H1 (cell line): ENCODE measurements at regions of chr11 and their contacts with region 1.

Region 1: GRCh38 chr11:46295312-46296058 is 18.0 kb downstream of the CREB3L1 start:
- DNase-seq: peak; percentile 64 to 92
- H3K4me3 ChIP-seq: peak overlapping the region; percentile 42 to 67 (median 54)
- H3K27ac ChIP-seq: peak overlapping the region; percentile 79
- H3K4me1 ChIP-seq: peaks cover 22 to 49% (median 35%) of the 10 kb centered on the region in 4 experiments
- H3K27me3 ChIP-seq: no peaks in the 10 kb centered on the region
- CTCF ChIP-seq: no peak
- EP300 ChIP-seq: no peak
- POLR2A ChIP-seq: peak; percentile 71 to 89
- RAD21 ChIP-seq: no peak; a peak in 1 of 4 replicates

Region 2: GRCh38 chr11:46200537-46201281 is 94.8 kb before region 1 on chr11:
- CTCF ChIA-PET with region 1: no interaction called
- POLR2A ChIA-PET with region 1: no interaction called
- DNase-seq: peak in 1 of 2 experiments; percentile 42
- H3K4me3 ChIP-seq: no peak overlapping the region
- H3K27ac ChIP-seq: no peak overlapping the region
- H3K4me1 ChIP-seq: peaks cover 0 to 6% (median 3%) of the 10 kb centered on the region in 4 experiments; a peak in 4 of 7 replicates
- H3K27me3 ChIP-seq: no peaks in the 10 kb centered on the region
- CTCF ChIP-seq: no peak
- EP300 ChIP-seq: no peak
- POLR2A ChIP-seq: no peak
- RAD21 ChIP-seq: no peak

Region 3: DNA sequence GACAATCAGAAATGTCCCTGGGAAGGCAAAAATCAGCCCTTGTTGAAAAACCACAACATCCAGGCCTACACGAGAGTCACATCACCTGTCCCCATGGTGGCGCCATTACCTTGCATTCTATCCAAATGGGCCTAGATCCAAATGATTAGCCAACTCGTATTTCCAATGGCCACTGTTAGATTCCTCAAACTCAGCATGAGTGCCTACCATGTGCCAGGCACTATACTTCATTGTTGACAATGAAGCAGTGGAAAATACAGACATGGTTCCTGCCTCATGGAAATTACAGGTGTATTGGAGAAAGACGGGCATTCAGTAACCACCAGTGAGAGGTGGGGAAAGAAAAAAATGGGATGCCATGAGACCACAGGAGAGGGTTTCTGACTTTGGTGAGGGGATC is 47.8 kb before region 1 on chr11:
- CTCF ChIA-PET with region 1: interaction called, 858 read pairs
- POLR2A ChIA-PET with region 1: interaction called, 127 read pairs
- DNase-seq: peak in 1 of 2 experiments; percentile 72
- H3K4me3 ChIP-seq: no peak overlapping the region
- H3K27ac ChIP-seq: no peak overlapping the region
- H3K4me1 ChIP-seq: peaks cover 1 to 8% (median 3%) of the 10 kb centered on the region in 4 experiments; a peak in 6 of 7 replicates
- H3K27me3 ChIP-seq: no peaks in the 10 kb centered on the region
- CTCF ChIP-seq: peak; percentile 77 to 92 (median 88)
- EP300 ChIP-seq: no peak
- POLR2A ChIP-seq: no peak
- RAD21 ChIP-seq: peak; percentile 97 to 98

Region 4: GRCh38 chr11:46278387-46279125 is 16.9 kb before region 1 on chr11:
- CTCF ChIA-PET with region 1: interaction called, 105 read pairs
- POLR2A ChIA-PET with region 1: interaction called, 51 read pairs
- DNase-seq: peak in 1 of 2 experiments; percentile 92
- H3K4me3 ChIP-seq: peak overlapping the region; percentile 54 to 81 (median 64)
- H3K27ac ChIP-seq: no peak overlapping the region
- H3K4me1 ChIP-seq: peaks cover 18 to 35% (median 24%) of the 10 kb centered on the region in 4 experiments; a peak in 6 of 7 replicates
- H3K27me3 ChIP-seq: no peaks in the 10 kb centered on the region
- CTCF ChIP-seq: peak; percentile 68 to 86 (median 72)
- EP300 ChIP-seq: no peak
- POLR2A ChIP-seq: no peak
- RAD21 ChIP-seq: peak; percentile 43 to 69

Region 5: GRCh38 chr11:46315033-46315738 is 19.7 kb after region 1 on chr11:
- CTCF ChIA-PET with region 1: interaction called, 253 read pairs
- POLR2A ChIA-PET with region 1: interaction called, 55 read pairs
- DNase-seq: peak; percentile 77 to 95
- H3K4me3 ChIP-seq: no peak overlapping the region
- H3K27ac ChIP-seq: no peak overlapping the region
- H3K4me1 ChIP-seq: no peaks in the 10 kb centered on the region
- H3K27me3 ChIP-seq: no peaks in the 10 kb centered on the region
- CTCF ChIP-seq: peak; percentile 84 to 93 (median 84)
- EP300 ChIP-seq: no peak
- POLR2A ChIP-seq: no peak
- RAD21 ChIP-seq: peak; percentile 79 to 83

Region 6: DNA sequence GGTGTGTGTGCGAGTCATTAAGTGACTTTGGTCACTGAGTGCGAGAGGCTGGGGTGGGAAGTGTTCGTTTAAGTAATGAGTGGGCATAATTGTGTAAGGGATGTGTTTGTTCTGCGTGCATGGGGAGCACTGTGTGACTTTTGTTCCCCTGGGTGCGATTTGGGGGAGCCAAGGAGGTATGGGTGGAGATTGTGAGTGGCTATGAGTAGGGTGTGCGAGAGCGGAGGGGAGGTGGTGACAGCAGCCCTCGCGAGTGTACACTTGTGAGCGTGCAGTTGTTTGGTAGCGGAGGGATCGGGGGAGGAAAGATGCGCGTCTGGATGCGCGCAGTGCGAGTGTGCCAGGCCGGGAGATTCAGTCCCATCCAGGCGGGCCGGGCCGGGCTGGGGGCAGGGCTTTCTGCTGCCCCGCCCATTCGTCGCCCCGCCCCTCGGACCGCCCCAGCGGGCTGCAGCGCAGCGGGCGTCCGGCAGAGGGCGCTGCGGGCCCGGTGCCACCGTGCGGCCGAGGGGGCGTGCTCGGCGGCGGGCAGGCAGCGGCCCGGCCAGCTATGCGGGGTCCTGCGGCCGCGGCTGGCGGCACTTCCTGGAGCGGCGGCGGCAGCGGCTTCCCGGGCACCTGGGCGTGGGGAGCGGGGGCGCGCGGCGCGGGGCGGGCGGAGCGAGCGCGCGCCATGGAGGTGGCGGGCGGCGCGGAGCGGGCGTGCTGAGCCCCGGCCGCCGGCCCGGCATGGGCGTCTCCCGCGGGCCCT is 51.6 kb after region 1 on chr11 and contains the start of gene DGKZ:
- CTCF ChIA-PET with region 1: interaction called, 29 read pairs
- POLR2A ChIA-PET with region 1: interaction called, 9 read pairs
- DNase-seq: peak in 1 of 2 experiments; percentile 98
- H3K4me3 ChIP-seq: peak within 1 kb of the TSS; percentile 71 to 83 (median 77)
- H3K27ac ChIP-seq: no peak within 1 kb of the TSS
- H3K4me1 ChIP-seq: peaks cover 26 to 47% (median 33%) of the 10 kb centered on the region in 4 experiments
- H3K27me3 ChIP-seq: peaks cover 0 to 7% (median 3%) of the 10 kb centered on the region in 4 experiments; a peak in 1 of 7 replicates
- CTCF ChIP-seq: peak; percentile 90 to 96 (median 94)
- EP300 ChIP-seq: no peak
- POLR2A ChIP-seq: peak in 1 of 2 experiments; percentile 43; a peak in 1 of 3 replicates
- RAD21 ChIP-seq: peak; percentile 31 to 66; a peak in 3 of 4 replicates
- total RNA-seq, gene DGKZ: 84.4 and 88.5 TPM in 2 replicates

Region 7: DNA sequence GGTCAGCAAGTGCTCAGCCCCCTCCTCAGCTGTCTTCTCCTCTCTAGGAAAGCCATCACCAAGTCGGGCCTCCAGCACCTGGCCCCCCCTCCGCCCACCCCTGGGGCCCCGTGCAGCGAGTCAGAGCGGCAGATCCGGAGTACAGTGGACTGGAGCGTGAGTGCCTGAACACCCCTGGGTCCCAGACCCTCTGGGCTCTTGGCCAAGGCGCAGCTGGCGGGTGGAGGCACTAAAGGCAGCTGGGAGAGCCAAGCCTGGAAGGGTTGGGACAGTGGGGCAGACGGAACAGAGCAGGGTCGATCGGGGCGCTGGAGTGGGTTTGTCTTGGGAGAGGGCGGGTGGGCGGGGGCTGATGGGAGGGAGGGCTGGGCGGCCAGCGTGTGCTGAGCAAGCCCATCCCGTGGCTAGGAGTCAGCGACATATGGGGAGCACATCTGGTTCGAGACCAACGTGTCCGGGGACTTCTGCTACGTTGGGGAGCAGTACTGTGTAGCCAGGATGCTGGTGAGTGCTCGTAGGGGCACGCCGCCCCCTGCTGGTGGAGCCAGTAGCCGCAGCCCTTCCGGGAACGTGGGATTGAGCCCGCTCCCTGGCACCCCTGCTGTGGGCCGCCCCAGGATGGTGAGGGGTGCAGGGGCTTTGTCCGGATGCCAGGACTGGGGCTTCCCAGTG is 71.9 kb after region 1 on chr11:
- CTCF ChIA-PET with region 1: interaction called, 10 read pairs
- POLR2A ChIA-PET with region 1: interaction called, 7 read pairs
- DNase-seq: peak in 1 of 2 experiments; percentile 95
- H3K4me3 ChIP-seq: no peak overlapping the region
- H3K27ac ChIP-seq: no peak overlapping the region; the same call in 1 of the 2 replicates
- H3K4me1 ChIP-seq: peaks cover 0 to 17% (median 8%) of the 10 kb centered on the region in 4 experiments; a peak in 5 of 7 replicates
- H3K27me3 ChIP-seq: no peaks in the 10 kb centered on the region
- CTCF ChIP-seq: peak in 2 of 3 experiments; percentile 75 to 90; a peak in 3 of 4 replicates
- EP300 ChIP-seq: no peak
- POLR2A ChIP-seq: no peak
- RAD21 ChIP-seq: peak; percentile 64 to 72